ENCODE measurements at regions of chr4 and their contacts with region 1.

Region 1: DNA sequence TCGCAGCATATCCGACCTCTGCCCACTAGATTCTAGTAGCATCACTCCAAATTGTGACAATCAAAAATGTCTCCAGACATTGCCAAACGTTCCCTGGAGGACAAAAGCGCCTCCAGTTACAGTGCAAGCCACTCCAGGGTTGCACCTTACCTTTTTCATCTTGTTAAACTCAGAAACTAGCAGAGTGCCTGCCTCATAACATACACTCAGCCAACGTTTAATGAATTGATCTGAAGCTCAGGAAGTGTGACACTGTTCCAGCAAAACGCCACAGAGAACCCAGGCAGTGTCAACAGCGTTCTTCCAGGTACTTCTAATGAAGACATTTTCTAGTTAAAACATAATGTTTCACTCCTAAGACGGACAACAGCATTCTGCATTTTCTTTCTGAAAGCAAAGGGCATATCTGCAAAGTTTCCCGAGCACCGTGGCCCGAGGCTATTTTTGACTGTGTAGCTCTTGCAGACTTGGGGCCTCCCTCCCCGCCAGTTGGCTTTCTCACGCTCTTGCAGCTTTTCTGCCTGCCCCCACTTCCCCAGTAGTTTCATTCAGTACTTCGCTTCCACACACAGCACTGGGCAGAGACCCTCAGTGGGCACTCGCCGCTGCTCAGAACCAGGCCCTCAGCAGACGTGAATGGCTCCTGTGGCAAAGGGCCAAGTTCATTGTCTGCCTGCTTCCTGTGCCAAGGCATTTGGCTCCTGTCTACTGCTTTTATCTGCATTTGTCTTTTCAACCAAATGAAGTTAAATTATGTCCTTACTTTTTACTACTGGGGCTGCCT is 133.4 kb upstream of the TTC29 start:
- DNase-seq: peak; percentile 22 to 40
- ATAC-seq: peak; percentile 55 to 82 (median 70)
- H3K4me3 ChIP-seq: peak overlapping the region in 5 of 10 donors; percentile 24 to 40 (median 37)
- H3K27ac ChIP-seq: peak overlapping the region in 7 of 10 donors; percentile 13 to 51 (median 27)
- H3K4me1 ChIP-seq: peaks cover 0 to 30% (median 20%) of the 10 kb centered on the region in 9 donors
- H3K27me3 ChIP-seq: no peaks in the 10 kb centered on the region
- CTCF ChIP-seq: no peak

Region 2: DNA sequence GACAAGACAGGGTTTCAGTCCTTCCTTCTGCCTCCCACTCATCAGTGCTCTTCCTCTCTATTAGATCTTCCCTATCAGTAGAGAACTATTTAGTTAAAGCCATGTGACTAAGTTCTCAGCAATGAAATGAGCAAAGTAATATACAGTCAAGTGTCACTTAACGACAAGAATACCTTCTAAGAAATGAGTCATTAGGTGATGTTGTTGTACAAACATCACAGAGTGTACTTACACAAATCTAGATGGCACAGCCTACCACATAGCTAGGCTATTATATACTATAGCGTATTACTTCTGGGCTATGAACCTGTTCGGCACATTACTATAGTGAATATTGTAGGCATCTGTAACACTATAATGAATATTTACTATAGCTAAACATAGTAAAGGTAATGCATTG is 369.1 kb before region 1 on chr4:
- intact Hi-C with region 1: no loop called
- DNase-seq: no peak
- ATAC-seq: no peak
- H3K4me3 ChIP-seq: no peak overlapping the region
- H3K27ac ChIP-seq: no peak overlapping the region
- H3K4me1 ChIP-seq: no peaks in the 10 kb centered on the region
- H3K27me3 ChIP-seq: no peaks in the 10 kb centered on the region
- CTCF ChIP-seq: no peak

Region 3: DNA sequence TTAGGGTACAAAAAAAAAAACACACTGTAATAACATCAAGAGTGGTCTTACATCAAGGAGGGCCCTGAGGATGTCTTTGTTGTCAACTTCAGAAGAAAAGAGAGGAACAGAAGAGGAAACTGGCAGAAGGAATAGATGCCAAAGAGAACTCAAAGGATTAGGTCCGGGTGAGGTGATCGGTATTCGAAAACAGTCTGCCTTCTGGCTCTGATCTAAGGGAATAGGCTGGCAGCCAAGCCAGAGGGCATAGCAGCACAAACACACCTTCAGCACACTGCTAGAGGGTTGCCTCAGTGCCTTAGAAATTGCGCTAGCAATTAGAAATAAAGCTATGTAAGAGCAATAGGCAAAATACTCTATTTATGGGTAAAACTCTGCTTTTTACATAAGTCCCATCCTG is 42.0 kb before region 1 on chr4:
- intact Hi-C with region 1: loop called in 1 of 10 experiments (anchors 5 kb)
- DNase-seq: no peak
- ATAC-seq: peak in 1 of 8 donors; percentile 62
- H3K4me3 ChIP-seq: no peak overlapping the region
- H3K27ac ChIP-seq: no peak overlapping the region
- H3K4me1 ChIP-seq: no peaks in the 10 kb centered on the region
- H3K27me3 ChIP-seq: peaks cover 0 to 20% (median 0%) of the 10 kb centered on the region in 7 donors
- CTCF ChIP-seq: no peak